Naive thymus-derived CD4-positive, alpha-beta T cell (primary cell): ENCODE measurements at regions of chrX and their contacts with region 1.

Region 1: DNA sequence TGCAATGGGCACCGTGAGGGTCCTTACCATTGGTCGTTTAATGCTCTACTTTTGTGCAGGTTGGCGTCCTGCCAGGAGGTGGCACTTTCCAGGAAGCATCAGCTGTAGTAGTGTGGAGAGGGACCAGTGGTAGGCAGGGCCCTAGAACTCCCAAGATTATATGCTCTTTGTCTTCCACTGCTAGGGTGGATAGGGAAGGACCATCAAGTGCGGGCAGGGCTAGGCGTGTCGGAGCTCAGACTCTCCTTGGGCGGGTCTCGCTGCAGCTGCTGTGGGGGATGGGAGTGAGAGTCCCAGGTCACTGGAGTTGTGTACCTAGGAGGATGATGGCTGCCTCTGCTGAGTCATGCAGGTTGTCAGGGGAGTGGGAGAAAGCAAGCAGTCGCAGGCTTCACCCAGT is 134.7 kb downstream of the KLF8 start:
- DNase-seq: no peak
- ATAC-seq: no peak
- H3K4me3 ChIP-seq: no peak overlapping the region
- H3K4me3 Mint-ChIP-seq: peak overlapping the region in 3 of 10 donors; percentile 21 to 53 (median 23)
- H3K27ac ChIP-seq: no peak overlapping the region
- H3K27ac Mint-ChIP-seq: peak overlapping the region in 7 of 9 donors; percentile 19 to 96 (median 47)
- H3K4me1 ChIP-seq: peaks cover 4 to 52% of the 10 kb centered on the region in 2 donors
- H3K4me1 Mint-ChIP-seq: peaks cover 19 to 64% (median 59%) of the 10 kb centered on the region in 7 donors
- H3K27me3 ChIP-seq: no peaks in the 10 kb centered on the region
- H3K27me3 Mint-ChIP-seq: no peaks in the 10 kb centered on the region

Region 2: DNA sequence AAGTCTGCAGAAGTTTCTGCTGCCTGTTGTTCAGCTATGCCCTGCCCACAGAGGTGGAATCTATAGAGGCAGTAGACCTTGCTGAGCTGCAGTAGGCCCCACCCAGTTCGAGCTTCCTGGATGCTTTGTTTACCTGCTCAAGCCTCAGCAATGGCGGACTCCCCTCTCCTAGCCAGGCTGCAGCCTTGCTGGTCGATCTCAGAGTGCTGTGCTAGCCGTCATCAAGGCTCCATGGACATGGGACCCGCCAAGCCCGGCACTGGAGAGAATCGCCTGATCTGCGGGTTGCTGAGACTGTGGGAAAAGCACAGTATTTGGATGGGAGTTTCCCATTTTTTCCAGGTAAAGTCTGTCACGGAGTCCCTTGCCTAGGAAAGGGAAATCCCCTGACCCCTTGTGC is 259.6 kb before region 1 on chrX:
- CTCF ChIA-PET with region 1: no interaction called
- POLR2A ChIA-PET with region 1: no interaction called
- intact Hi-C with region 1: no loop called
- DNase-seq: no peak
- ATAC-seq: no peak
- H3K4me3 ChIP-seq: no peak overlapping the region
- H3K4me3 Mint-ChIP-seq: no peak overlapping the region
- H3K27ac ChIP-seq: no peak overlapping the region
- H3K27ac Mint-ChIP-seq: no peak overlapping the region
- H3K4me1 ChIP-seq: no peaks in the 10 kb centered on the region
- H3K4me1 Mint-ChIP-seq: no peaks in the 10 kb centered on the region
- H3K27me3 ChIP-seq: no peaks in the 10 kb centered on the region
- H3K27me3 Mint-ChIP-seq: no peaks in the 10 kb centered on the region

Region 3: GRCh38 chrX:56314334-56314733 is 52.6 kb before region 1 on chrX:
- CTCF ChIA-PET with region 1: no interaction called
- POLR2A ChIA-PET with region 1: no interaction called
- intact Hi-C with region 1: loop called in 1 of 2 experiments (anchors 1 kb)
- DNase-seq: peak in 5 of 9 donors; percentile 0 to 32 (median 11)
- ATAC-seq: no peak
- H3K4me3 ChIP-seq: no peak overlapping the region
- H3K4me3 Mint-ChIP-seq: peak overlapping the region in 8 of 10 donors; percentile 46 to 79 (median 68)
- H3K27ac ChIP-seq: no peak overlapping the region
- H3K27ac Mint-ChIP-seq: peak overlapping the region in 7 of 9 donors; percentile 5 to 88 (median 59)
- H3K4me1 ChIP-seq: no peaks in the 10 kb centered on the region
- H3K4me1 Mint-ChIP-seq: peaks cover 0 to 15% (median 11%) of the 10 kb centered on the region in 7 donors
- H3K27me3 ChIP-seq: no peaks in the 10 kb centered on the region
- H3K27me3 Mint-ChIP-seq: no peaks in the 10 kb centered on the region

Region 4: DNA sequence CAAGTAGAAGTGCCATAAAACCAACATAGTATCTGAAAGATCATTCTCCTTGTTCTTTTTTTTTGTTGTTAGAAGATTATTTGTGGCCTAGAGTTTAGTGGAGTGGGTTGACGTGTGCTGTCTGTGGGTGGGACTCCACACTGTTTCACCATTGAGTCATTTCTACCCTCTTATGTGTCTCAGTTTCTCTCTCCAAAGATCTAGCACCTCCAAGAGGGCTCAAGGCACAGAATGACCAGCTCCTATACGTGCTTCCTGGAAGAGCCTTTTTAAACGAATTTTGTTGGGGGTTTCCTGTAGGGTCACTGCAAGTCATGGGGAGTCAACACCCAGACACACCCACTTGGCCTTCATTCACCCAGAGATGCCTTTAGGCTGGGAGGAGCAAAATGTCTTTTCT is 15.4 kb after region 1 on chrX:
- CTCF ChIA-PET with region 1: no interaction called
- POLR2A ChIA-PET with region 1: no interaction called
- intact Hi-C with region 1: loop called in 1 of 2 experiments (anchors 2 kb)
- DNase-seq: peak in 1 of 9 donors; percentile 24
- ATAC-seq: no peak
- H3K4me3 ChIP-seq: no peak overlapping the region
- H3K4me3 Mint-ChIP-seq: peak overlapping the region in 6 of 10 donors; percentile 7 to 78 (median 44)
- H3K27ac ChIP-seq: no peak overlapping the region
- H3K27ac Mint-ChIP-seq: peak overlapping the region in 8 of 9 donors; percentile 29 to 92 (median 80)
- H3K4me1 ChIP-seq: peaks cover 0 to 23% of the 10 kb centered on the region in 2 donors
- H3K4me1 Mint-ChIP-seq: peaks cover 18 to 53% (median 38%) of the 10 kb centered on the region in 7 donors
- H3K27me3 ChIP-seq: no peaks in the 10 kb centered on the region
- H3K27me3 Mint-ChIP-seq: no peaks in the 10 kb centered on the region